ENCODE measurements at regions of chr2 and their contacts with region 1.

Region 1: GRCh38 chr2:75403991-75404428 is 156.7 kb downstream of the EVA1A start:
- DNase-seq: no peak
- ATAC-seq: peak in 1 of 2 donors; percentile 45
- H3K4me3 ChIP-seq: no peak overlapping the region
- H3K27ac ChIP-seq: no peak overlapping the region
- H3K4me1 ChIP-seq: no peaks in the 10 kb centered on the region
- H3K27me3 ChIP-seq: peaks cover 0 to 6% (median 0%) of the 10 kb centered on the region in 3 donors
- CTCF ChIP-seq: peak in 4 of 5 experiments; percentile 34 to 69 (median 61)
- POLR2A ChIP-seq: no peak

Region 2: DNA sequence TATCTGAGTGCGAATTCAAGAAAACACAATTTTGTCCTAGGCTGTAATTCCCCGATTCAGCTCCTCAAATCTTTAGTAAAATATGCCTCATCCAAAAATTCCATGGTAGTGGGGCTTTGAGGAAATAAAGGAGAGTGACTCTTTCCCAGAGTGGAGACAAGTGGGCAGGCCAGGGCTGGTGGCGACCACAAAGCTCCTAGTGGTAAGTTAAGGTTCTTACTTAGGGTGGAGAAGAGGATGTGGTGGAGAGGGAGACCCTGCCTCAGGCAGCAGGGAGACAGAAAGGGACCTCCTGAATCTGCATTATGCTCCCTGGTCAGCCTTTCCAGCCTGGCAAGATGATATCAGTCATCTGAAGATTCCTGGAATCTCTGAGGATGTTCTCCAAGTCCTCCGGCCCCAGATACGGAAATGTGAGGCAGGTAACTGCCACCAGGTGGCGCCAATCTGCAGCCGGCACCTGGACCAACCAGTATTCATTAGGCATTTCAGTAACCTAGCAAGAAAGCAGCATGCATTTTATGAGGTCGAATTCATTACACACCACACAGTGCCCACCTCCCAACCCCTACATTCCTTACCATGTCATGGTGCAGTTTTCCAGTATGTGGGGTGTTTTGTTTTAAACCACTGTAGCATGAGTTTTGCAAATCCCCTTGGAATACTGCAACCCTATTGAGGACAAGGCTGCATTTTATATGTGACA is 339.2 kb before region 1 on chr2:
- in situ Hi-C with region 1: loop called in 1 of 4 experiments (anchors 25 kb)
- intact Hi-C with region 1: loop called (anchors 10 kb)
- DNase-seq: peak; percentile 8 to 19
- ATAC-seq: peak in 1 of 2 donors; percentile 30
- H3K4me3 ChIP-seq: no peak overlapping the region
- H3K27ac ChIP-seq: no peak overlapping the region
- H3K4me1 ChIP-seq: no peaks in the 10 kb centered on the region
- H3K27me3 ChIP-seq: no peaks in the 10 kb centered on the region
- CTCF ChIP-seq: peak in 4 of 5 experiments; percentile 54 to 77 (median 64)
- POLR2A ChIP-seq: no peak

Region 3: DNA sequence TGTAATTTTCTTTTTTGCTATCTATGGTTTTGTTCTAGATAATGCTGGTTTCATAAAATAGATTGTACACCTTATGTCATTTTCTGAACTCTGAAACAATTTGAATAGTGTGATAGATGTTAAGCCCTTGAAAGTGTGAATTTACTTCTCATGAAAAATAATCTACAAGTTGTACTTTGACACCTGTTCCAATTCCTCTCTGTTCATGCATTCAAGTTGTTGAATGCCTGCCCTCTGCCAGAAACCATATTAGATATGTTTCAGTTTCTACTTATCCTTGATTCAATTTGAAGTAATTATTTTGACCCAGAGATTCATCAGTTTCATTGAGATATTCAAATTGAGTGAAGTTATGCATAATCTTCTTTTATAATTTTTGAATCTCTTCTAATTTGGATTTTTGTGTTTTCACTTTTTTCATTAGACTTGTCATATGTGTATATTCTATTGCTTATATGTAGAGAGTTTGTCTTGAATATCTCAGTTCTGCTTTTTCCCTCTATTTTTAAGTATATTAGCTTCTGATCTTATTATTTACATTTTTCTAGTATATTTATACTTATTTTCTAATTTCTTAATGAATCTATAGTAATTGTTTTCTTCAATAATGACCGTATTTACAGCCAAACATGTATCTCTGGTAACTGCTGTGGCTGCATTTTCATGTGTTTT is 61.4 kb before region 1 on chr2:
- in situ Hi-C with region 1: no loop called
- intact Hi-C with region 1: no loop called
- DNase-seq: no peak
- ATAC-seq: no peak
- H3K4me3 ChIP-seq: no peak overlapping the region
- H3K27ac ChIP-seq: no peak overlapping the region
- H3K4me1 ChIP-seq: no peaks in the 10 kb centered on the region
- H3K27me3 ChIP-seq: no peaks in the 10 kb centered on the region
- CTCF ChIP-seq: no peak
- POLR2A ChIP-seq: no peak